Psoas muscle (tissue), 8 donors: ENCODE measurements at regions of chr3 and their contacts with region 1.

Region 1: GRCh38 chr3:42871592-42872196 is 4.0 kb downstream of the CYP8B1 start:
- DNase-seq: no peak
- ATAC-seq: peak in 1 of 4 donors; percentile 15
- H3K4me3 ChIP-seq: no peak overlapping the region
- H3K27ac ChIP-seq: no peak overlapping the region
- H3K4me1 ChIP-seq: no peaks in the 10 kb centered on the region
- H3K27me3 ChIP-seq: peaks cover 0 to 2% (median 0%) of the 10 kb centered on the region in 3 donors
- CTCF ChIP-seq: no peak

Region 2: GRCh38 chr3:42846685-42847522 is 24.8 kb before region 1 on chr3:
- intact Hi-C with region 1: loop called in 1 of 2 experiments (anchors 2 kb)
- DNase-seq: peak in 1 of 2 donors; percentile 59
- ATAC-seq: peak in 1 of 4 donors; percentile 34
- H3K4me3 ChIP-seq: no peak overlapping the region
- H3K27ac ChIP-seq: peak overlapping the region; percentile 32
- H3K4me1 ChIP-seq: peaks cover 18% of the 10 kb centered on the region
- H3K27me3 ChIP-seq: no peaks in the 10 kb centered on the region
- CTCF ChIP-seq: no peak